ENCODE measurements at regions of chr22 and their contacts with region 1.

Region 1: DNA sequence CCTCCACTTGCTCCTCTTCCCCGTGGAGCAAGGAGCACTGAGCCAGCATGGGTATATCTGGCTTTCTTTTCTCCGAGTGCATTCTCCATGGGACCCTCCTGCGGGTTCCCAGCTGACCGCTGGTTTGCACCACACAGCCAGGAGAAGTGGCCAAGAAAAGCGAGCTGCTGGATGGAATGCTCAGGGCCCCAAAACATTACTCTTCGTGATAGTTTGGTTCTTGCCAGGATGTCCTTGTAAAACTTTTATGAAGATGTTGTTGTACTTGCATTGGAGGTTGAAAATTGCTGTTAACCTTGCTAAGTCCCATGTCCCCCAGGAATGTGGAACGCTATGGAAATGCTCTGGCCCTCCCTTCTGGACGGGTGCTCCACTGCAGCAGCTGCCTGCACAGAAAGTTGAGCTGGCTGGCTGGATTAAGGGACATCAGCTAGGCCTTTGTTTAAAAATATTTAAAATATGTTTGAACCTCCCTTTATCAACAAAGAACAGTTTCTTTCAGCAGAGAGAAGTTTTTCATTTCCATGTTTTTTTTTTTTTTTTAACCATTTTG is 68.7 kb downstream of the ZNRF3 start:
- DNase-seq: peak; percentile 39
- ATAC-seq: peak; percentile 75
- H3K4me3 ChIP-seq: no peak overlapping the region
- H3K27ac ChIP-seq: no peak overlapping the region; the same call in 1 of the 2 replicates
- H3K4me1 ChIP-seq: peaks cover 11% of the 10 kb centered on the region
- H3K27me3 ChIP-seq: no peaks in the 10 kb centered on the region
- CTCF ChIP-seq: peak; percentile 32
- POLR2A ChIP-seq: no peak
- RAD21 ChIP-seq: peak; percentile 28; the same call in 1 of the 2 replicates

Region 2: GRCh38 chr22:28855355-28856094 is 96.5 kb before region 1 on chr22:
- CTCF ChIA-PET with region 1: interaction called, 3 read pairs
- POLR2A ChIA-PET with region 1: no interaction called
- dilution Hi-C with region 1: no loop called
- in situ Hi-C with region 1: no loop called
- intact Hi-C with region 1: loop called (anchors 10 kb)
- DNase-seq: peak; percentile 78
- ATAC-seq: peak; percentile 96
- H3K4me3 ChIP-seq: no peak overlapping the region
- H3K27ac ChIP-seq: no peak overlapping the region
- H3K4me1 ChIP-seq: no peaks in the 10 kb centered on the region
- H3K27me3 ChIP-seq: no peaks in the 10 kb centered on the region
- CTCF ChIP-seq: peak; percentile 88
- POLR2A ChIP-seq: no peak
- RAD21 ChIP-seq: peak; percentile 92

Region 3: GRCh38 chr22:28925916-28926315 is 26.1 kb before region 1 on chr22:
- CTCF ChIA-PET with region 1: no interaction called
- POLR2A ChIA-PET with region 1: no interaction called
- dilution Hi-C with region 1: no loop called
- in situ Hi-C with region 1: no loop called
- intact Hi-C with region 1: loop called (anchors 1 kb)
- DNase-seq: no peak
- ATAC-seq: no peak
- H3K4me3 ChIP-seq: no peak overlapping the region
- H3K27ac ChIP-seq: no peak overlapping the region
- H3K4me1 ChIP-seq: peaks cover 4% of the 10 kb centered on the region; the same call in 1 of the 2 replicates
- H3K27me3 ChIP-seq: no peaks in the 10 kb centered on the region
- CTCF ChIP-seq: no peak
- POLR2A ChIP-seq: no peak
- RAD21 ChIP-seq: no peak

Measured in IMR-90 (cell line).